ENCODE measurements at regions of chr15 and their contacts with region 1.

Region 1: DNA sequence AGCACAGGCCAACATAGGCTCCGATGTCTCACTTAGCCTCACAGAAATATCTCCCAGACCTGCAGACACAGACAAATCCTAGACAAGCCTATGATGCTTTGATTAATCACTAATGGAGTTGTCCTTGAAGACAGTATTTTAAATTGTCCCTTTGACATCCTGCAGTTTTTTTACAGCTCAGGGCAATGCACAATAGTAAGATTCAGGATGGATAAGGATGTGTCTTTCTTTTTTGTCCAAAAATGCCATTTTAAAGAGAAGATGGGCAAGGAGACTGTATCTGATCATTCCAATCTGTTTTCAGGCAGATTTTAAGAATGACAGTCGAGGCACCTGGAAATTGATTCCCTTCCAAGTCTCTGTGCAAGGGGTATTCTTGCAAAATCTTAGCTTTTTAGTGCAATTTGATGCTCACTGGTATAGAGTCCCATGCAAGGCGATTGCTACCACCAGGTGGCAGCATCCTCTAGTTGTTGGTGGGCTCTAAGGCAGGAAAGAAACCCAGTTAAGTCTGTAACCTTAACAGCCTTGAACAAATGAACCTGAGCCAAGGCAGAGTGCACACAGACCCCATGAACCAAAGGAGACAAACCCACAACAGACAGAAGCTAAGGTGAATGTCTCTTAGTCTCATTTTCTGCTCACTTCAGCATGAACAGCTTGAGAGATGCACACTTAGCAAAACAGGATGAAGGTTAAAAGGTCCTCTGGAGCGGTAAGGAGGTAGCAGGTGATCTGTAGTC is 51.2 kb upstream of the MINAR1 start:
- DNase-seq: peak; percentile 31 to 84 (median 70)
- ATAC-seq: peak; percentile 65 to 85 (median 78)
- H3K4me3 ChIP-seq: no peak overlapping the region
- H3K4me3 Mint-ChIP-seq: no peak overlapping the region
- H3K27ac ChIP-seq: no peak overlapping the region
- H3K27ac Mint-ChIP-seq: no peak overlapping the region
- H3K4me1 ChIP-seq: peaks cover 0 to 3% of the 10 kb centered on the region in 2 experiments
- H3K4me1 Mint-ChIP-seq: peaks cover 0 to 2% (median 2%) of the 10 kb centered on the region in 3 donors
- H3K27me3 ChIP-seq: no peaks in the 10 kb centered on the region
- H3K27me3 Mint-ChIP-seq: no peaks in the 10 kb centered on the region

Region 2: GRCh38 chr15:79310612-79310982 is 70.3 kb before region 1 on chr15:
- CTCF ChIA-PET with region 1: no interaction called
- POLR2A ChIA-PET with region 1: no interaction called
- DNase-seq: peak in 2 of 35 experiments; percentile 0 to 5
- ATAC-seq: peak; percentile 51 to 64 (median 59)
- H3K4me3 ChIP-seq: peak overlapping the region; percentile 44 to 92
- H3K4me3 Mint-ChIP-seq: peak overlapping the region; percentile 77 to 83 (median 82)
- H3K27ac ChIP-seq: no peak overlapping the region
- H3K27ac Mint-ChIP-seq: no peak overlapping the region
- H3K4me1 ChIP-seq: peaks cover 8 to 24% of the 10 kb centered on the region in 2 experiments
- H3K4me1 Mint-ChIP-seq: peaks cover 30 to 41% (median 37%) of the 10 kb centered on the region in 3 donors
- H3K27me3 ChIP-seq: no peaks in the 10 kb centered on the region
- H3K27me3 Mint-ChIP-seq: peaks cover 12 to 15% of the 10 kb centered on the region in 2 donors

Region 3: DNA sequence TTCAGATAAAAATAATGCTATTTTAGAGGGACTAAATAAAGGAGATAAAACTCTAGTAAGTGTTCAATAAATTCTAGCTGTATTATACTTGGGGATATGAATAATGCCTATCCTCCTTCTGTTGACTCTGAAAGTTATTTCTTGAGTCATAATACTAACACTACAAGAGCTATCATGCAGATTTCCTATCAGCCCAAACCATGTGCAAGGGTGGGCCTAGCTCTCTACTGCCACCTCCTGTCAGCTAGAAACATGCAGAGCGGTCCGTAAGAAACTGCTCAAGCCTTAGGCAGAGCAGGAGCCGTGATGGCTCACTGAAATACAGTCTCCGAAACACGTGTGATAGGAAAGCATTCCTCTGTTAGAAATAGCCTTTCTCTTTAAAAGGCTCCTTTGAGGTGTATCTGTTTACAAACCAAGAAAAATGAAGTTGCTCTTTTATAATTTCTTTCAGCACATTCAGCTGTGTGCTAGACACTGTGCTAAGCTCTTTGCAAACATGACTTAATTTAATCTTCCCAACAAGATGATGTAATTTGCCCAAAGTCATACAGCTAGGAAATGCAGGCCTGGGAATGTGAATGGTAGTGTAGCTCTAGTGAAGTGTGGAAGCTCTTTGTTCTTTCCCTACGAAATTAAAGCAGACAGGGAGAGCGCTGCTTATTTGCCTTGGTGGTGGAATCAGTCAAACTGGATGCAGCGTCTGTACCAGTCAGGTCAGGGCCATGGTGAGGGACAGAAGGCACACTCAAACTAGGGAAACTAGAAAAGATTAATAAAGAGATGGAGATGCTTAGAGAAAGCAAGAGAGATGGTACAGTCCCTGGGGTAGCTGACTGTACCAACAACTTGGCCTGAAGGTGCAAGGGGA is 472.8 kb after region 1 on chr15:
- CTCF ChIA-PET with region 1: interaction called, 10 to 27 read pairs
- POLR2A ChIA-PET with region 1: no interaction called
- DNase-seq: peak; percentile 4 to 78 (median 45)
- ATAC-seq: peak; percentile 88 to 98 (median 93)
- H3K4me3 ChIP-seq: no peak overlapping the region
- H3K4me3 Mint-ChIP-seq: no peak overlapping the region
- H3K27ac ChIP-seq: no peak overlapping the region
- H3K27ac Mint-ChIP-seq: no peak overlapping the region
- H3K4me1 ChIP-seq: peaks cover 0 to 3% of the 10 kb centered on the region in 2 experiments
- H3K4me1 Mint-ChIP-seq: peaks cover 23 to 33% (median 23%) of the 10 kb centered on the region in 3 donors
- H3K27me3 ChIP-seq: no peaks in the 10 kb centered on the region
- H3K27me3 Mint-ChIP-seq: no peaks in the 10 kb centered on the region

Region 4: GRCh38 chr15:79991826-79992225 is 610.9 kb after region 1 on chr15:
- CTCF ChIA-PET with region 1: interaction called, 7 to 13 read pairs
- POLR2A ChIA-PET with region 1: no interaction called
- DNase-seq: no peak
- ATAC-seq: no peak
- H3K4me3 ChIP-seq: no peak overlapping the region
- H3K4me3 Mint-ChIP-seq: no peak overlapping the region
- H3K27ac ChIP-seq: no peak overlapping the region
- H3K27ac Mint-ChIP-seq: no peak overlapping the region
- H3K4me1 ChIP-seq: no peaks in the 10 kb centered on the region
- H3K4me1 Mint-ChIP-seq: peaks cover 0 to 1% (median 1%) of the 10 kb centered on the region in 3 donors
- H3K27me3 ChIP-seq: no peaks in the 10 kb centered on the region
- H3K27me3 Mint-ChIP-seq: no peaks in the 10 kb centered on the region

Region 5: DNA sequence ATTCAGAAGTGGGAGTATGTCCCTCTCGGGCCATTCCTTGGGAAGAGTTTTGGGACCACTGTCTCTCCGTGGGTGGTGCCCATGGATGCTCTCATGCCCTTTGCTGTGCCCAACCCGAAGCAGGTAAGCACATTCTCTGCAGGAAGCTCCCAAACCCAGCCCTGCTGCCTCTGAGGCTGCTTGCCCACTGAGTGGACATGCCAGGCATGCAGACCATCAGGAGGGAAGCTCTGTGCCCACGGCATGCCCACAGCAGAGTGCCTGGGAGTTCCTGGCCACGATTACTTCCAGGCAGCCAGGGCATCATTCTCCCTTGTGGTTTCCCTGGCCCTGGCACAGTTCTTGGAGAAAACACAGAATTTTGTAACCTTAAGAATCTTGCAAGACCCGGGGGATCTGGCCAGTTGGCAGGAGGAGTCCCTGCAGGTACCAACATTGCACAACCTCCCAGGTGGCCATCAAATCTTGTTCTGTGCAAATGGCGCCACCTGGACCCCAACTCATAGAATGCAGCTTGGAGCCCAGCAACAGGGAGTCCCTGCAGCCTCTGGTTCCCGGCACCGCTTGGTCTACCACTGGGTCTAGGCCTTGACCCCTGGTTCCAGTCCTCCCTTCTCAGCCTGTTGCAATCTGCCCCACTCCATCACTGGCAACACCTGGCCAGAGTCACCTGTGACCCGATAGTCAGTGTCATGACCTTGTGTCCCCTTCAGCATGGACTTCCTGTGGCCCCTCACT is 792.3 kb after region 1 on chr15:
- CTCF ChIA-PET with region 1: interaction called, 6 to 18 read pairs
- POLR2A ChIA-PET with region 1: no interaction called
- DNase-seq: peak; percentile 21 to 77 (median 59)
- ATAC-seq: peak; percentile 69 to 79 (median 75)
- H3K4me3 ChIP-seq: no peak overlapping the region
- H3K4me3 Mint-ChIP-seq: no peak overlapping the region
- H3K27ac ChIP-seq: no peak overlapping the region
- H3K27ac Mint-ChIP-seq: no peak overlapping the region
- H3K4me1 ChIP-seq: peaks cover 0 to 2% of the 10 kb centered on the region in 2 experiments
- H3K4me1 Mint-ChIP-seq: no peaks in the 10 kb centered on the region
- H3K27me3 ChIP-seq: no peaks in the 10 kb centered on the region
- H3K27me3 Mint-ChIP-seq: no peaks in the 10 kb centered on the region